A549 (cell line): ENCODE measurements at regions of chr1 and their contacts with region 1.

Region 1: GRCh38 chr1:116139592-116140134 is 28.5 kb downstream of the MAB21L3 start:
- DNase-seq: no peak
- ATAC-seq: no peak; a peak in 1 of 6 replicates
- H3K4me3 ChIP-seq: no peak overlapping the region
- H3K27ac ChIP-seq: no peak overlapping the region
- H3K4me1 ChIP-seq: no peaks in the 10 kb centered on the region
- CTCF ChIP-seq: no peak
- EP300 ChIP-seq: no peak
- POLR2A ChIP-seq: no peak
- RAD21 ChIP-seq: no peak

Region 2: GRCh38 chr1:116110567-116111523 is 28.8 kb before region 1 on chr1 and contains the start of gene MAB21L3:
- CTCF ChIA-PET with region 1: interaction called, 11 read pairs
- POLR2A ChIA-PET with region 1: no interaction called
- DNase-seq: no peak
- ATAC-seq: peak; percentile 52 to 66; a peak in 4 of 6 replicates
- H3K4me3 ChIP-seq: no peak within 1 kb of the TSS; the same call in 2 of the 3 replicates
- H3K27ac ChIP-seq: peak within 1 kb of the TSS; percentile 72 to 82
- H3K4me1 ChIP-seq: peaks cover 28% of the 10 kb centered on the region
- CTCF ChIP-seq: no peak
- EP300 ChIP-seq: no peak
- POLR2A ChIP-seq: no peak
- RAD21 ChIP-seq: no peak
- polyA plus RNA-seq, gene MAB21L3: 0.09 and 0.30 TPM in 2 replicates

Region 3: DNA sequence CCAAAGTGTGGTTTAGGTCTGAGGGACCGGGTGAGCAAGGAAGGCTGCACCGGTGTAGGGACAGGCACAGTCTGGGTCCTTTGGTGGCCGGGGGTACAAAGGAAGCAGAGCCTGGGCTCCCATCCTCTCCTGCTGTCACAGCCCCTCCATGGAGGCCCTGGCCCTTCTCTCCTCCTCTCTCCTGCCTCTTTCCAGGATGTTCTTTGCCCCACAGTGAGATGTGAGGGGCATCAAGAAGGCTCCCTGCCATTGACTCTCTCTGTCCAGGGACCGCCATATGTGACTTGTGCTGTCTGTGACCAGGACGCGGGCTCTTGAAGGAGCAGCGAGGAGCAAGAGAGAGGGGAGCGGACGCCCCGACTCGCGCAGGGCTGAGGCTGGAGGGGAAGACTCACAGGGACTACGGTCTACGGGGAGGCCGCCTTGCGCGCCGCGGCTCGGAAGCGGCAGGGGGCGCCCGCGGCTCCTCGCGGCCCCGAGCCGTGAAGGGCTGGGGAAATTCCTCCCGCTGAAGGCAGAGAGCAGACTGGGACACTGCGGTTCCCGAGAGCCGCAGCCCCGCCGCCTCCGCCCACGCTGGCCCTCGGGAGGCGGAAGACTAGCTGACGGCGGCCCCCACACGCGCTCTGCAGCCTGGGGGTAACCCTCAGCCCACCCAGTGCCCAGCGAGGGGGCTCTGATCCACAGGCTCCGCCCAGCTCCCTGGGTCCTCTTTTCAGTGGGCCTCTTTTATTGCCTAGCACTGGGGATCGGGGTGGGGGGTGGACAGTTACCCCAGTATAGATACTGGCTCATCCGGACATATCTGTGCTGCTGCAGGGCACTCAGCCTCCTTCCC is 12.3 kb after region 1 on chr1:
- CTCF ChIA-PET with region 1: interaction called, 69 read pairs
- POLR2A ChIA-PET with region 1: no interaction called
- DNase-seq: peak; percentile 54 to 77
- ATAC-seq: peak; percentile 98 to 100
- H3K4me3 ChIP-seq: peak overlapping the region; percentile 43
- H3K27ac ChIP-seq: peak overlapping the region; percentile 80 to 93
- H3K4me1 ChIP-seq: peaks cover 10% of the 10 kb centered on the region
- CTCF ChIP-seq: peak; percentile 75
- EP300 ChIP-seq: no peak
- POLR2A ChIP-seq: peak; percentile 21; the same call in 1 of the 2 replicates
- RAD21 ChIP-seq: peak; percentile 44 to 69

Region 4: GRCh38 chr1:116194568-116195474 is 55.2 kb after region 1 on chr1:
- CTCF ChIA-PET with region 1: no interaction called
- POLR2A ChIA-PET with region 1: no interaction called
- DNase-seq: no peak
- ATAC-seq: no peak
- H3K4me3 ChIP-seq: no peak overlapping the region
- H3K27ac ChIP-seq: no peak overlapping the region
- H3K4me1 ChIP-seq: no peaks in the 10 kb centered on the region
- CTCF ChIP-seq: no peak
- EP300 ChIP-seq: no peak
- POLR2A ChIP-seq: no peak
- RAD21 ChIP-seq: no peak

Region 5: DNA sequence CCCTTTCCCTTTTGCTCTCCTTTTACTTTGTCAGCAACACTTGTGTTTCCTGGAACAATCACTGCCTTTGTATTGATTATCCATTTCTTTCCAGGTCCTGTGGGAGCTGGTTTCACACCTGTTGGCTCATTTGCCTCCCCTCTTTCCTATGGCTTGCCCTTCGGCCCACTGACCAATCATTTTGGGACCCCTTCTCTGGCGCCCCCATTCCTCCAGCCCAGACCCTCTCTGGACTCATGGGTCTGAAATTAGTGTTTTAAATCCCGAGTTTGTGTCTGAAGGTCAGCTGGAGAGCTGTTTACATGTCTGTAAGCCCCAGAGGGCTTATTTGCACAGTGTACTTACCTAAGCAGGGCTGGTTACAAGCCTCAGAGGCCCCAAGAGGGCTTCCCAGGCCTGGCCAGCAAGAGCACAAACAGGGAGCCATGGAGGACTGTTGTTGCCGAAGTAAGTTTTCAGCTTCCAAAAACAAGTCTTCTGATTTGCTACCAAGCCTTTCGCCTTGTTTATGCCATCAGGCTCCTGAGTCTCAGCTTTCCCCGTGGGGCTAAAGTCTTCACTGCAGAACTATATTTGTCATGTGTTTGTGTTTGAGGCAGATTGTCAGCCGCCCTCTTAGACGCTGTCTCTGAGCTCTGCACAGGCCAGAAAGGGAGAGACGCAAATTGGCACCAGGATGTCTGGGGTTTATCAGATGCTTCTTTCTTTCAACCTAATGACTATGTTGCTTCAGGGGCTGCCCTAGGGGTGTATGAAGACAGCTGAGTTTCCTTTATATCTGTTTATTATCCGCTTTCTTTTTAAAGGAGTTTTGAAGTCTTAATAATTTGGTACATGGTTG is 326.4 kb after region 1 on chr1:
- CTCF ChIA-PET with region 1: interaction called, 12 read pairs
- POLR2A ChIA-PET with region 1: no interaction called
- DNase-seq: no peak
- ATAC-seq: no peak
- H3K4me3 ChIP-seq: no peak overlapping the region
- H3K27ac ChIP-seq: no peak overlapping the region
- H3K4me1 ChIP-seq: peaks cover under 1% of the 10 kb centered on the region; the same call in 2 of the 3 replicates
- CTCF ChIP-seq: no peak
- EP300 ChIP-seq: no peak
- POLR2A ChIP-seq: no peak
- RAD21 ChIP-seq: no peak

Region 6: GRCh38 chr1:116478621-116479020 is 339.0 kb after region 1 on chr1:
- CTCF ChIA-PET with region 1: interaction called, 209 read pairs
- POLR2A ChIA-PET with region 1: no interaction called
- DNase-seq: no peak
- ATAC-seq: no peak
- H3K4me3 ChIP-seq: no peak overlapping the region
- H3K27ac ChIP-seq: no peak overlapping the region
- H3K4me1 ChIP-seq: peaks cover 9% of the 10 kb centered on the region; the same call in 1 of the 3 replicates
- CTCF ChIP-seq: no peak
- EP300 ChIP-seq: no peak
- POLR2A ChIP-seq: no peak
- RAD21 ChIP-seq: no peak

Region 7: GRCh38 chr1:116492358-116492811 is 352.7 kb after region 1 on chr1:
- CTCF ChIA-PET with region 1: interaction called, 209 read pairs
- POLR2A ChIA-PET with region 1: no interaction called
- DNase-seq: no peak
- ATAC-seq: no peak
- H3K4me3 ChIP-seq: no peak overlapping the region
- H3K27ac ChIP-seq: no peak overlapping the region
- H3K4me1 ChIP-seq: peaks cover 16% of the 10 kb centered on the region; the same call in 2 of the 3 replicates
- CTCF ChIP-seq: no peak
- EP300 ChIP-seq: no peak
- POLR2A ChIP-seq: no peak
- RAD21 ChIP-seq: no peak

Region 8: DNA sequence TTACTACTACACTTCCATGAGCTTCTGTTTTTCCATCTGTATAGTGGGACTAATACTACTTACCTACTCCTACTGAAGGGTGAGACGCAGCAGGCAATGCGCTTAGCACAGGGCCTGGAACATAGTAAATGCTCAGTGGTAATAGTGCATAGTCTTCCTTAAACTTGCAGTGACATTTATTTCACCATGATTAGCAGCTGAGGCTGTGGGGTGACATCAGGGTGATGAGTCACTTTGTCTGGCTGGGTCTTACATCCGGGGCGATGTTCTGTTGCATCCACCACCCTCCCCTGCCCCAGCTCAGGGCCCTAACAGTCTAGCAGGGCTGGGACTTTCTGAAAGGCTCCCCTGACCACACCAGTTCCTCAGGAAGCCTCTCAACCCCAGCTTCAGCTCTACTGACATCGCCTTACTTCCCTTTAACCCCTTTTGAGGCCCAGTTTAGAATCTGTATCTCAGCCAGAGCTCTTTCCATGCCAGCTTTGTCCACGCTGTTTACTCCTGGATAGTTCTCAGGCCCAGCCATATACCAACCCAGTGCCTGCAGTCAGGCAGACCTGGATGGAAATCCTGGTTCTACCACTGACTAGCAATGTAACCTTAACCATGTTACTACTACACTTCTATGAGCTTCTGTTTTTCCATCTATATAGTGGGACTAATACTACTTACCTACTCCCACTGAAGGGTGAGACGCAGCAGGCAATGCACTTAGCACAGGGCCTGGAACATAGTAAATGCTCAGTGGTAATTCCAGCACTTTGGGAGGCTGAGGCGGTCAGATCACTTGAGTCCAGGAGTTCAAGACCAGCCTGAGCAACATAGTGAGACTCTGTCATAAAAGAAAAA is 364.9 kb after region 1 on chr1:
- CTCF ChIA-PET with region 1: interaction called, 108 read pairs
- POLR2A ChIA-PET with region 1: interaction called, 4 read pairs
- DNase-seq: peak; percentile 8 to 48
- ATAC-seq: peak in 1 of 2 experiments; percentile 45; a peak in 3 of 6 replicates
- H3K4me3 ChIP-seq: no peak overlapping the region
- H3K27ac ChIP-seq: peak overlapping the region; percentile 67 to 84
- H3K4me1 ChIP-seq: peaks cover 58% of the 10 kb centered on the region
- CTCF ChIP-seq: no peak
- EP300 ChIP-seq: no peak
- POLR2A ChIP-seq: no peak
- RAD21 ChIP-seq: no peak